CD8-positive, alpha-beta T cell (primary cell): ENCODE measurements at regions of chr1 and their contacts with region 1.

Region 1: GRCh38 chr1:244835276-244836134 is at the start of gene COX20:
- DNase-seq: peak; percentile 81 to 96 (median 90)
- ATAC-seq: peak; percentile 64
- H3K4me3 ChIP-seq: peak within 1 kb of the TSS; percentile 74 to 84
- H3K4me3 Mint-ChIP-seq: peak within 1 kb of the TSS; percentile 94
- H3K27ac ChIP-seq: peak within 1 kb of the TSS; percentile 88 to 98
- H3K27ac Mint-ChIP-seq: peak within 1 kb of the TSS; percentile 99
- H3K4me1 ChIP-seq: peaks cover 34% of the 10 kb centered on the region
- H3K4me1 Mint-ChIP-seq: peaks cover 48% of the 10 kb centered on the region
- H3K27me3 ChIP-seq: no peaks in the 10 kb centered on the region
- H3K27me3 Mint-ChIP-seq: no peaks in the 10 kb centered on the region
- CTCF ChIP-seq: no peak
- total RNA-seq, gene COX20: 17.4 to 17.7 TPM

Region 2: DNA sequence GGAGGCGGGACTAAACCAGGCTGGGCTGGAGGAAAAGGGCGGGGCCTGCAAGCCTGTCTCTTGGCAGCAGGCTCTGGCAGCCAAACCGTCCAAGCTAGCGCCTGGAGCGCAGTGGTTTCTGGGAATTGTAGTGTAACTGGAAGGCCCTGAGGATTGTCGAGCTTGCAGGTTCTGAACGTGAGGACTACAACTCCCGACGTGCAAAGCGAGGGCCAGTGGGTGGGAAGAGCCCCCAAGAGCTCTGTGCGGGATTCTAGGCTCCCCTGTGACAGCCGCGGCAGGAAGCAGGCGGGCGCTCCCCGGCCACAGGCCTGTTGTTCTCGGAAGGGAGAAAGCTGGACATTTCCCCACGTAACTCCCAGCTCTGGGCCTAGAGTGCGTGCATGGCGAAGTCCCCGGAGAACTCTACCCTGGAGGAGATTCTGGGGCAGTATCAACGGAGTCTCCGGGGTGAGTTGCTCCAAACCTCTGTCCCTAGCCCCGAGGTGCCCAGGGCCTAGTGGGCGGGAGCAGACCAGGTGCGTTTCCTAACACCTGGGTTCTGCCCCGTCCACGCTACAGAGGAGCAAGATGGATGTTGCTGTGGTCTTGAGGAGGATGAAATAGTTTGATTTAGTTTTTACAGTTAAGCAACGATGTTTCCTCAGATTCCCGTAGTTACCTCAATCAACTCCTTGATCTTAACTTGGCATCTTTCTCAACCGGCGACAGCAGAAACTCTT is 1579.6 kb before region 1 on chr1 and contains the start of gene SDCCAG8:
- CTCF ChIA-PET with region 1: no interaction called
- POLR2A ChIA-PET with region 1: no interaction called
- intact Hi-C with region 1: loop called (anchors 2 to 10 kb)
- DNase-seq: peak; percentile 85 to 98 (median 93)
- ATAC-seq: peak; percentile 75
- H3K4me3 ChIP-seq: peak within 1 kb of the TSS; percentile 77 to 86
- H3K4me3 Mint-ChIP-seq: peak within 1 kb of the TSS; percentile 96
- H3K27ac ChIP-seq: peak within 1 kb of the TSS; percentile 93 to 94
- H3K27ac Mint-ChIP-seq: peak within 1 kb of the TSS; percentile 99
- H3K4me1 ChIP-seq: peaks cover 26% of the 10 kb centered on the region
- H3K4me1 Mint-ChIP-seq: peaks cover 55% of the 10 kb centered on the region
- H3K27me3 ChIP-seq: no peaks in the 10 kb centered on the region
- H3K27me3 Mint-ChIP-seq: no peaks in the 10 kb centered on the region
- CTCF ChIP-seq: no peak
- total RNA-seq, gene SDCCAG8: 17.7 to 25.4 TPM

Region 3: GRCh38 chr1:244451951-244452795 is 383.3 kb before region 1 on chr1:
- CTCF ChIA-PET with region 1: no interaction called
- POLR2A ChIA-PET with region 1: interaction called, 4 read pairs
- intact Hi-C with region 1: loop called (anchors 1 to 10 kb)
- DNase-seq: peak; percentile 97 to 100 (median 99)
- ATAC-seq: peak; percentile 83
- H3K4me3 ChIP-seq: peak overlapping the region; percentile 78 to 95
- H3K4me3 Mint-ChIP-seq: peak overlapping the region; percentile 91
- H3K27ac ChIP-seq: peak overlapping the region; percentile 95 to 96
- H3K27ac Mint-ChIP-seq: peak overlapping the region; percentile 97
- H3K4me1 ChIP-seq: peaks cover 32% of the 10 kb centered on the region
- H3K4me1 Mint-ChIP-seq: peaks cover 45% of the 10 kb centered on the region
- H3K27me3 ChIP-seq: no peaks in the 10 kb centered on the region
- H3K27me3 Mint-ChIP-seq: no peaks in the 10 kb centered on the region
- CTCF ChIP-seq: peak; percentile 55

Region 4: GRCh38 chr1:244801246-244801645 is 34.3 kb before region 1 on chr1:
- CTCF ChIA-PET with region 1: interaction called, 10 read pairs
- POLR2A ChIA-PET with region 1: interaction called, 4 read pairs
- intact Hi-C with region 1: loop called (anchors 1 to 2 kb)
- DNase-seq: peak in 8 of 9 experiments; percentile 32 to 81 (median 66)
- ATAC-seq: peak; percentile 96
- H3K4me3 ChIP-seq: no peak overlapping the region
- H3K4me3 Mint-ChIP-seq: no peak overlapping the region
- H3K27ac ChIP-seq: no peak overlapping the region
- H3K27ac Mint-ChIP-seq: no peak overlapping the region
- H3K4me1 ChIP-seq: no peaks in the 10 kb centered on the region
- H3K4me1 Mint-ChIP-seq: peaks cover 4% of the 10 kb centered on the region
- H3K27me3 ChIP-seq: peaks cover 0 to 4% of the 10 kb centered on the region in 2 experiments
- H3K27me3 Mint-ChIP-seq: peaks cover 12% of the 10 kb centered on the region
- CTCF ChIP-seq: peak; percentile 75

Region 5: DNA sequence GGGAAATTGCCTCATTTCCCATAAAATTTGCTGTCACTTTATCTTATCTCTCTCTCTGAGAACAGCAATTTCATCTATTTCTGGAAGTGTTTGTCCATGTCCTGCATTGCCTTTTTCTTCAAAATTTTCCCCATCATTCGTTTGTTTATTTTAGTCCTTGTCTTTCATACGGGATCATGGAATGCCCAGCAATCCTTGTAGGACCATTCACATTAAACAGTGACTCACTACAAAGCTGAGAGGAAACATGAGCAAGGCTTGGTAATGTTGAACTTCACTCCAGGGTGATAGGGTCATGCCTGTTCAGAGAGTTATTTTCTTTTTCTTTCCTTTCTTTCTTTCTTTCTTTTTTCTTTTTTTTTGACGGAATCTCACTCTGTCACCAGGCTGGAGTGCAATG is 61.0 kb after region 1 on chr1:
- CTCF ChIA-PET with region 1: no interaction called
- POLR2A ChIA-PET with region 1: no interaction called
- intact Hi-C with region 1: no loop called
- DNase-seq: no peak
- ATAC-seq: no peak
- H3K4me3 ChIP-seq: no peak overlapping the region
- H3K4me3 Mint-ChIP-seq: no peak overlapping the region
- H3K27ac ChIP-seq: no peak overlapping the region
- H3K27ac Mint-ChIP-seq: no peak overlapping the region
- H3K4me1 ChIP-seq: no peaks in the 10 kb centered on the region
- H3K4me1 Mint-ChIP-seq: no peaks in the 10 kb centered on the region
- H3K27me3 ChIP-seq: no peaks in the 10 kb centered on the region
- H3K27me3 Mint-ChIP-seq: no peaks in the 10 kb centered on the region
- CTCF ChIP-seq: no peak

Region 6: GRCh38 chr1:244918421-244919319 is 83.2 kb after region 1 on chr1:
- CTCF ChIA-PET with region 1: interaction called, 3 read pairs
- POLR2A ChIA-PET with region 1: interaction called, 12 read pairs
- intact Hi-C with region 1: loop called (anchors 1 kb)
- DNase-seq: peak; percentile 36 to 91 (median 68)
- ATAC-seq: peak; percentile 96
- H3K4me3 ChIP-seq: peak overlapping the region; percentile 55
- H3K4me3 Mint-ChIP-seq: peak overlapping the region; percentile 86
- H3K27ac ChIP-seq: peak overlapping the region in 1 of 2 experiments; percentile 33
- H3K27ac Mint-ChIP-seq: peak overlapping the region; percentile 64
- H3K4me1 ChIP-seq: peaks cover 6% of the 10 kb centered on the region
- H3K4me1 Mint-ChIP-seq: peaks cover 11% of the 10 kb centered on the region
- H3K27me3 ChIP-seq: no peaks in the 10 kb centered on the region
- H3K27me3 Mint-ChIP-seq: no peaks in the 10 kb centered on the region
- CTCF ChIP-seq: no peak

Region 7: GRCh38 chr1:245045087-245045881 is 209.8 kb after region 1 on chr1:
- CTCF ChIA-PET with region 1: interaction called, 9 read pairs
- POLR2A ChIA-PET with region 1: no interaction called
- intact Hi-C with region 1: loop called in 1 of 2 experiments (anchors 1 kb)
- DNase-seq: no peak
- ATAC-seq: no peak
- H3K4me3 ChIP-seq: no peak overlapping the region
- H3K4me3 Mint-ChIP-seq: no peak overlapping the region
- H3K27ac ChIP-seq: no peak overlapping the region
- H3K27ac Mint-ChIP-seq: no peak overlapping the region
- H3K4me1 ChIP-seq: no peaks in the 10 kb centered on the region
- H3K4me1 Mint-ChIP-seq: peaks cover 2% of the 10 kb centered on the region
- H3K27me3 ChIP-seq: no peaks in the 10 kb centered on the region
- H3K27me3 Mint-ChIP-seq: no peaks in the 10 kb centered on the region
- CTCF ChIP-seq: no peak